Tibial artery (tissue), 4 donors: ENCODE measurements at regions of chr6 and their contacts with region 1.

Region 1: DNA sequence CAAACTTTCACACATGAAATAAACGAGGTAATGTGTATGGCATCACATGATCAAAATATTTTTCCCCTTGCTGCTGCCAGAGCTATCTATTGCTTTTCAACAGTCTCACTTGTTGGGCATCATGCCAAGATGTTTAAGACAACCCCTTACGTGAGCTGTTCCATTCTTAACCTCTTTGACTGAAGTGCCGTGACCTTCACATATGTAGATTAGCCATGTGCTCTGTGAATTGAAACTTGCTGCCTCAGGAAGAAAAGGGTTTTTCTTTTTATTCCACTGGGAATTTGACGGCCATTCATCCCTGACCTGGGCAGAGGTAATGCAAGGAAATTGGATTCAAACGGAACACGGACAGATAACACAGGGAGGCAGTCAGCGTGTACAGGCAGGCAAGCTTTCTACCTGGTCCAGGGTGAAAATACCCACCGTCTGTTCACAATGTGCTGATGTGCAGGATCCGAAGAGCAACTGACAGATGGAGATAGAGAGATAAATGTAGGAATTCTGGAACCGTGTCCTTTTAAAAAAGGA is 14.2 kb downstream of the ARID1B start:
- DNase-seq: no peak
- H3K4me3 ChIP-seq: no peak overlapping the region
- H3K27ac ChIP-seq: no peak overlapping the region
- H3K4me1 ChIP-seq: peaks cover 0 to 100% (median 63%) of the 10 kb centered on the region in 4 donors
- H3K27me3 ChIP-seq: no peaks in the 10 kb centered on the region
- CTCF ChIP-seq: no peak

Region 2: GRCh38 chr6:156949376-156949775 is 158.0 kb after region 1 on chr6:
- intact Hi-C with region 1: loop called (anchors 10 kb)
- DNase-seq: no peak
- H3K4me3 ChIP-seq: no peak overlapping the region
- H3K27ac ChIP-seq: no peak overlapping the region
- H3K4me1 ChIP-seq: peaks cover 0 to 62% (median 29%) of the 10 kb centered on the region in 4 donors
- H3K27me3 ChIP-seq: no peaks in the 10 kb centered on the region
- CTCF ChIP-seq: no peak